Right ventricle myocardium inferior (tissue), 1 donor: ENCODE measurements at regions of chrX and their contacts with region 1.

Region 1: GRCh38 chrX:2474963-2475726 is 25.6 kb downstream of the DHRSX start:
- DNase-seq: no peak
- ATAC-seq: no peak

Region 2: DNA sequence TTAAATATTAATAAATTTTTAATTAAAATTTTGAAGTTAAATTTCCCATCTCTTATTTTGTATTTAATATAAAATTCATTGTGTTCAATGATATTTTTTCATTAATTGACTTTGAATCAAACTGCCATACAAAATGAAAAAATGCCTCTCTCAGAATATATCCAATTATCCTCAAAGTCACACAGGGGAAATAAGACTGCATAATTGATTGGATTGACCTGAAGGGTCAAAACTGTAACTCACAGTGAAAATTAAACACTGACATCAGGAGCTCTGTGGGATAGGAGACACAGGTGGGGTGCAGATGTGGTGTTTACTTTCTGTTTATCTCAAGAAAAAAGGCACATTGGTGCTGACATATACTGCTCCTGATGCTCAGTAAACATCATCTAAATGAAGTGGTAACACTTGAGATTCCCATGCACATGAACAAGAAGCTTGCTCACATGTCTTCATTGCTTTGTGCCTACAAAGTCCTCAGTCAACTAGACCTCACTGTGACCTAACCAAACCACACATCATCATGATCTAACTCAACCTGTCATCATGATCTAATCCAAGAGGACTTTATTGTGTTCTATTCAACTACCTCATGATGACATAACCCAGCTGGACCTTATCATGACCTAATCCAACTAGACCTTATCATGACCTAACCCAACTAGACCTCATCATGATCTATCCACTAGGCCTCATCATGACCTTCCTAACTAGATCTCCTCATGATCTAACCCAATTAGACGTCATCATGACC is 58.1 kb before region 1 on chrX:
- intact Hi-C with region 1: loop called (anchors 5 kb)
- DNase-seq: no peak
- ATAC-seq: no peak

Region 3: GRCh38 chrX:2650865-2651264 is 175.7 kb after region 1 on chrX:
- intact Hi-C with region 1: no loop called
- DNase-seq: no peak
- ATAC-seq: no peak